AG04450 (cell line): ENCODE measurements at regions of chr7 and their contacts with region 1.

Region 1: GRCh38 chr7:134058980-134059379 is 68.2 kb upstream of the LRGUK start:
- DNase-seq: no peak
- H3K4me3 ChIP-seq: no peak overlapping the region
- H3K27ac ChIP-seq: no peak overlapping the region
- H3K27me3 ChIP-seq: no peaks in the 10 kb centered on the region
- CTCF ChIP-seq: no peak

Region 2: GRCh38 chr7:134084488-134085144 is 25.6 kb after region 1 on chr7:
- CTCF ChIA-PET with region 1: interaction called, 12 read pairs
- POLR2A ChIA-PET with region 1: no interaction called
- DNase-seq: no peak
- H3K4me3 ChIP-seq: no peak overlapping the region
- H3K27ac ChIP-seq: no peak overlapping the region
- H3K27me3 ChIP-seq: no peaks in the 10 kb centered on the region
- CTCF ChIP-seq: no peak